Mucosa of descending colon (tissue), 3 donors: ENCODE measurements at regions of chr15 and their contacts with region 1.

Region 1: GRCh38 chr15:41022487-41023090 is 69.3 kb downstream of the CHAC1 start:
- DNase-seq: peak in 1 of 3 donors; percentile 55
- ATAC-seq: peak; percentile 72
- H3K4me3 ChIP-seq: no peak overlapping the region
- H3K4me1 ChIP-seq: no peaks in the 10 kb centered on the region
- CTCF ChIP-seq: peak; percentile 34

Region 2: GRCh38 chr15:40906091-40906990 is 116.2 kb before region 1 on chr15:
- intact Hi-C with region 1: loop called (anchors 5 kb)
- DNase-seq: peak; percentile 96 to 98 (median 96)
- ATAC-seq: peak; percentile 88
- H3K4me3 ChIP-seq: no peak overlapping the region
- H3K4me1 ChIP-seq: peaks cover 36% of the 10 kb centered on the region
- CTCF ChIP-seq: peak; percentile 95

Region 3: DNA sequence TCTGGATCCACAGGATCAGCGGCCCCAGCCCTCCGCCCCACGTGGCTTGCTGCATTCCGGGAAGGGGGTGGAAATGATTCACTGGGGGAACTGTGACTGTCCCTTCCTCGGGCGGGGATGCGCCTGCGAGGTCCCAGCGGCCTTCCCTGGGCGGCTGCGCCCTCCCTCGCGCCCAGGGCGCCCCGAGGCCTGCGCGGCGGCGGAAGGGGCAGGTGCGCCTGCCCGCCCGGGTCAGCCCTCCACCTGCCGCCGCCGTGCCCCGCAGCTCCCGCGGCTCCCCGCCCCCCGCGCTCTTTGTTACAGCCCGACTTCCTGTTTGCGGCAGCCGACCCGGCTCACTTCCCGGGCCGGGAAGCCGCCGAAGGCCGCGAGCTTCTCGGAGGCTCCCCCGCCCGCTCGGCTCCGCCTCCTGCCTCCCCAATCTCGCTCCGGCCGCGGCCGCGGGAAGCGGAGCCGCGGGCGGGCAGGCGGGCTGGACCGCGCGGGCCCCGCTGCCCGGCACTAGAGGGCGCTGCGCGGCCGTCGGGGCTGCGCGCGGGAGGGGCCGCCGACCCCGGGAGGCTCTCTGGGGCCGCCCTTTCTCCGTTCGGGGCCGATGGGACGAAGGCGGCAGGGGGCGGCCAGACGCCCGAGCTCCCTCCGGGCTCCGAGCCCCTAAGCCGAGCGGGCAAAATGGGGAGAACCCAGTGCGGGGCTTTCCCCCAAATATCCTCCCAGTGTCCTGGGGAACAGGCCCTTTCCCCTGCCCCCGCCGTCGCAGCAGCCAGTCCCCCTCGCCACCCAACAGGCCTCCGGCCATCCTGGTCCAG is 80.9 kb before region 1 on chr15:
- intact Hi-C with region 1: loop called in 1 of 2 experiments (anchors 10 kb)
- DNase-seq: peak; percentile 84 to 91 (median 88)
- ATAC-seq: peak; percentile 91
- H3K4me3 ChIP-seq: peak overlapping the region; percentile 28
- H3K4me1 ChIP-seq: peaks cover 9% of the 10 kb centered on the region
- CTCF ChIP-seq: peak; percentile 74